AG04449 (cell line): ENCODE measurements at regions of chr5 and their contacts with region 1.

Region 1: GRCh38 chr5:59390074-59390659 is 503.4 kb downstream of the PDE4D start:
- DNase-seq: no peak
- H3K4me3 ChIP-seq: no peak overlapping the region
- CTCF ChIP-seq: peak; percentile 26

Region 2: DNA sequence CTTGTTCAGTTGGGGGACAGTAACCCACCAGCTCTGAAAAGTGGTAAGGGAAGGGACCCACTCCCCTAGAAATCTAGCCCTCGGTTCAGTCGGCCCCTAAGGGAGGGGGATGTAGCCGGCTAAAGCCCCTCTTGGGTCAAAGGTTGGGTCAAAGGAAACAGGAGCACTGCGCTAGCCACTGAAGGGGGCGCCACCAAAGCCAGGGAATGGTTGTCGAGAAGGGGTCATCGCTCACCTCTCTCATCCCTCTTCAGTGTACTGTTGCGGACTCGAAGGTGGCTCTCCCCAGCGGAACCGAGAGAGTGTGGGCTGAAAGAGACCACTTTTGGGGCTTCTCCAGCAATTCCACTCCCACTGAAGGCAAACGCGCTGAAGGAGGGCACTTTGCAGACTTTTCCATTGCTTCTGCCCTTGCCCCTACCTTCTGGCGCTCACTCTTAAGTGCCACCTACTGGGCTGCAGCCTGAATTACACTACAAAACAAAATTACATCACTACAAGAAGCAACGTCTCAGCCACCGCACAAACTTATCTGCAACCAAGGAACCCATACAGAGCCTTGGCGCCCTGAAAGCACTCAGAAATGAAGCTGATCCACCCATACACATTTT is 106.5 kb after region 1 on chr5:
- CTCF ChIA-PET with region 1: interaction called, 21 read pairs
- POLR2A ChIA-PET with region 1: no interaction called
- DNase-seq: no peak
- H3K4me3 ChIP-seq: no peak overlapping the region
- CTCF ChIP-seq: peak; percentile 52

Region 3: DNA sequence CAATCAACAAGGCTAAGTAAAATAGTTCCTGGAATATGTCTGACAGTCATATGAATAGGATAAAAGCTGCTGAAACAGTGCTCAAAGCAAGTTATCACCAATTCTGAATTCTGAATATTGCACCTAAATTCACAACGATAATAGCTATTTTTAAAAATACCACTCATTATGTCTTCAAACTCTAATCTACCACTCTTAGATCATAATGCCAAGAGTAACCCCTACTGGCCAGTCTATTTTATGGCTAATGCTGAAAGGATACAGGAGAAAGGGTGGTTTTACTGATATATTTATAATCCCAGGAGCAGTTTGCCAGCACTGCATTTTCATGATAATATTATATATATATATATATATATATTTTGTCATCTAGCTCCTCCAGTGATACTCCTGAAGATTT is 270.6 kb after region 1 on chr5:
- CTCF ChIA-PET with region 1: interaction called, 28 read pairs
- POLR2A ChIA-PET with region 1: no interaction called
- DNase-seq: no peak
- H3K4me3 ChIP-seq: no peak overlapping the region
- CTCF ChIP-seq: peak; percentile 34

Region 4: GRCh38 chr5:59673438-59674058 is 283.4 kb after region 1 on chr5:
- CTCF ChIA-PET with region 1: interaction called, 30 read pairs
- POLR2A ChIA-PET with region 1: no interaction called
- DNase-seq: no peak
- H3K4me3 ChIP-seq: no peak overlapping the region
- CTCF ChIP-seq: peak; percentile 50

Region 5: DNA sequence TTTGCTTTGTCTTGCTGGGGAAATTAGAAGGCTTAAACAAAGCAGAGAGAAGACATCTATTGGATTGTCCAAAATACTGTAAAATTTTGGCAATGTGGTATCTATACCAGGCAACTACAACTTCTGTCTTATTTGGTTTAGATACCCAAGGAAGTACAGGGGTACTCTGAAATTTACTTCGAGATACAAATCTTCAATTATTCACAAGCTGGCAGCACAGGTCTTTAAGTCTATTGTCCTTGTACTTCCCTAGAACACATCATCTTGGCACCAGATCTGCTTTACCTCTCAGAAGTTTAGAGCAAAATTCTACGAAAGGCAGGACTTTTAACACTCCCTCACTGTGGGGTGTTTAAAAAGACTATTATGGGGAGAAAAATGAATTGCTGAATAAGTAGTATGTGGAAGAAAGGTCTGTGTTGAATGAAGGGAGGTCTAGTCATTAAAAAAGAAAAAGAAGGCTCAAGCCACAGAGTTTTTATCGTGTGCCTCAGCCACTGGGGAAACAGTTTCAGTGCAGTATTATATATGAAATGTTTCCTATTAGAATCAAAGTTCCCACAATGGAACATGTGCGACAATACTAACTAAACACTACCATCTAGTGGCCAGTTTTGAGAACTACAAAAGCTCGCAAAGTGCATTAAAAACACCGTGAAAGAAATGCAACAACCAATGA is 409.6 kb after region 1 on chr5:
- CTCF ChIA-PET with region 1: interaction called, 66 read pairs
- POLR2A ChIA-PET with region 1: no interaction called
- DNase-seq: no peak
- H3K4me3 ChIP-seq: no peak overlapping the region
- CTCF ChIP-seq: peak; percentile 30